H1 (cell line): ENCODE measurements at regions of chr4 and their contacts with region 1.

Region 1: GRCh38 chr4:89541998-89542397 is 234.4 kb upstream of the GPRIN3 start:
- DNase-seq: no peak
- H3K4me3 ChIP-seq: no peak overlapping the region
- H3K27ac ChIP-seq: no peak overlapping the region
- H3K4me1 ChIP-seq: no peaks in the 10 kb centered on the region
- H3K27me3 ChIP-seq: no peaks in the 10 kb centered on the region
- CTCF ChIP-seq: no peak
- EP300 ChIP-seq: no peak
- POLR2A ChIP-seq: no peak
- RAD21 ChIP-seq: no peak

Region 2: GRCh38 chr4:89379511-89380044 is 162.4 kb before region 1 on chr4:
- CTCF ChIA-PET with region 1: no interaction called
- POLR2A ChIA-PET with region 1: no interaction called
- DNase-seq: no peak
- H3K4me3 ChIP-seq: no peak overlapping the region
- H3K27ac ChIP-seq: no peak overlapping the region
- H3K4me1 ChIP-seq: no peaks in the 10 kb centered on the region
- H3K27me3 ChIP-seq: no peaks in the 10 kb centered on the region
- CTCF ChIP-seq: no peak
- EP300 ChIP-seq: no peak
- POLR2A ChIP-seq: no peak
- RAD21 ChIP-seq: no peak

Region 3: GRCh38 chr4:89434364-89434988 is 107.5 kb before region 1 on chr4:
- CTCF ChIA-PET with region 1: no interaction called
- POLR2A ChIA-PET with region 1: no interaction called
- DNase-seq: no peak
- H3K4me3 ChIP-seq: no peak overlapping the region
- H3K27ac ChIP-seq: no peak overlapping the region
- H3K4me1 ChIP-seq: no peaks in the 10 kb centered on the region; a peak in 1 of 7 replicates
- H3K27me3 ChIP-seq: no peaks in the 10 kb centered on the region
- CTCF ChIP-seq: peak in 2 of 3 experiments; percentile 72 to 76; a peak in 3 of 4 replicates
- EP300 ChIP-seq: no peak
- POLR2A ChIP-seq: no peak
- RAD21 ChIP-seq: peak; percentile 87 to 90

Region 4: GRCh38 chr4:89558147-89558546 is 16.1 kb after region 1 on chr4:
- CTCF ChIA-PET with region 1: interaction called, 13 read pairs
- POLR2A ChIA-PET with region 1: no interaction called
- DNase-seq: peak in 1 of 2 experiments; percentile 7
- H3K4me3 ChIP-seq: no peak overlapping the region
- H3K27ac ChIP-seq: no peak overlapping the region
- H3K4me1 ChIP-seq: peaks cover 0 to 7% (median 3%) of the 10 kb centered on the region in 4 experiments; a peak in 2 of 7 replicates
- H3K27me3 ChIP-seq: peaks cover 0 to 8% (median 2%) of the 10 kb centered on the region in 4 experiments; a peak in 3 of 7 replicates
- CTCF ChIP-seq: peak in 2 of 3 experiments; percentile 45 to 59; a peak in 3 of 4 replicates
- EP300 ChIP-seq: no peak
- POLR2A ChIP-seq: no peak
- RAD21 ChIP-seq: peak; percentile 44 to 50; a peak in 3 of 4 replicates

Region 5: DNA sequence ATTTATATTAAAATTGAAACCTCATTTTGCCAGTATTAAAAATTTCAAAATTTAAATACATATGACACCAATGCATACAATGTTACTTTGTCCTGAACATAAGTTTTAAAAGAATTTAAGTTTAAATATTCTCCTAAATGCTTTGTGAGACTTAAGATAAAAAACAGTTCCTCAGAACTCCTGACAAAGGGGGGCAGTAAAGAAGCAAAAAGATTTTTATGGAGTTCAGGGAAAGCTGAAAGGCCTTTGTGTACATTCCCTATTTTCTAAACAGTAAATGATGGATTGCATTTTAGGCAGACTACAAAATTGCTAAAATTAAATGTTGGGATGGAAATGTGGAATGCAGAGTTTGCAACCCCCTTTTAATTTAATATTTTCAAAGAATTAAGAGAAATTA is 213.2 kb after region 1 on chr4:
- CTCF ChIA-PET with region 1: no interaction called
- POLR2A ChIA-PET with region 1: no interaction called
- DNase-seq: no peak
- H3K4me3 ChIP-seq: no peak overlapping the region
- H3K27ac ChIP-seq: no peak overlapping the region
- H3K4me1 ChIP-seq: peaks cover 0 to 4% (median 0%) of the 10 kb centered on the region in 4 experiments; a peak in 1 of 7 replicates
- H3K27me3 ChIP-seq: no peaks in the 10 kb centered on the region
- CTCF ChIP-seq: peak in 1 of 3 experiments; percentile 7; a peak in 1 of 4 replicates
- EP300 ChIP-seq: no peak
- POLR2A ChIP-seq: no peak
- RAD21 ChIP-seq: no peak